Activated CD8-positive, alpha-beta memory T cell treated with anti-CD3 and anti-CD28 coated beads, Interleukin-2, amount 10 ng/mL, durations not matched to agents 7 days and 5 days (primary cell): ENCODE measurements at regions of chr16 and their contacts with region 1.

Region 1: GRCh38 chr16:19523648-19524355 is at the start of gene CCP110:
- DNase-seq: peak; percentile 98
- ATAC-seq: peak; percentile 81
- H3K4me3 Mint-ChIP-seq: peak within 1 kb of the TSS; percentile 92
- H3K27ac Mint-ChIP-seq: peak within 1 kb of the TSS; percentile 95
- H3K4me1 Mint-ChIP-seq: peaks cover 41% of the 10 kb centered on the region
- H3K27me3 Mint-ChIP-seq: no peaks in the 10 kb centered on the region
- total RNA-seq, gene CCP110: 45.0 to 45.3 TPM

Region 2: GRCh38 chr16:19410435-19411161 is 113.2 kb before region 1 on chr16:
- CTCF ChIA-PET with region 1: no interaction called
- DNase-seq: peak; percentile 42
- ATAC-seq: peak; percentile 63
- H3K4me3 Mint-ChIP-seq: peak overlapping the region; percentile 36
- H3K27ac Mint-ChIP-seq: no peak overlapping the region
- H3K4me1 Mint-ChIP-seq: peaks cover 5% of the 10 kb centered on the region
- H3K27me3 Mint-ChIP-seq: peaks cover 48% of the 10 kb centered on the region

Region 3: GRCh38 chr16:19555162-19555937 is 31.5 kb after region 1 on chr16 and contains the start of gene VPS35L:
- CTCF ChIA-PET with region 1: interaction called, 41 read pairs
- DNase-seq: peak; percentile 97
- ATAC-seq: peak; percentile 98
- H3K4me3 Mint-ChIP-seq: peak within 1 kb of the TSS; percentile 92
- H3K27ac Mint-ChIP-seq: peak within 1 kb of the TSS; percentile 87
- H3K4me1 Mint-ChIP-seq: peaks cover 26% of the 10 kb centered on the region
- H3K27me3 Mint-ChIP-seq: no peaks in the 10 kb centered on the region
- total RNA-seq, gene VPS35L: 43.4 to 47.7 TPM

Region 4: DNA sequence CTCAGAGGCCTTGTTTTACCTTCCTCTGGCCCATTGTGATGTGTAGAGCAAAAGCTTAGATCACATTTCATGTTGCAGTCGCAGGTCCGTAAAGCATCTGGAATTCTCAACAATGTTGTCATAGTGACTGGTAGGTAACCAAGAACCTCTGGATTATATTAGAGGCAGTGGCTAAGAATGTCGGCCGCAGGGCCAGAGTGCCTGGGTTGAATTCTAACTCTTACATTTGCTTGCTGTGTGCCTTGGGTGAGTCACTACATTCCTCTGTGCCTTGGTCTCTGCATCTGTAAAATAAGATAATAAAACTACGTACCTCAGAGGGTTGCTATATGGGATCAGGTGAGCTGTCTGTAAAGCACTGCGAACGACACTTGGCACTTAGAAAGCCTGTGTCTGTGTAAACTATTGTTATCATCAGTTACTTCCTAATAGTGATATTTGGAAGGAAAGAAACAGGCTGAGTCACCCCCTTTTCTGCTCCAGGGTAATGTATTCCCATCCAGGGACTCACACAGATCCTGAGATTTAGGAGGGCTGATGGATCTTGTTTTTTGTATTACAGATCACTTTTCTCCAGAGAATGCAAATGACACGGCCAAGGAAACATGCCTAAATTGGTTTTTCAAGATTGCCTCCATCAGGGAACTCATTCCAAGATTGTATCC is 83.9 kb after region 1 on chr16:
- CTCF ChIA-PET with region 1: no interaction called
- DNase-seq: no peak
- ATAC-seq: no peak
- H3K4me3 Mint-ChIP-seq: no peak overlapping the region
- H3K27ac Mint-ChIP-seq: no peak overlapping the region
- H3K4me1 Mint-ChIP-seq: no peaks in the 10 kb centered on the region
- H3K27me3 Mint-ChIP-seq: no peaks in the 10 kb centered on the region